ENCODE measurements at regions of chr6 and their contacts with region 1.

Region 1: GRCh38 chr6:133502441-133503259 is 261.5 kb downstream of the EYA4 start:
- DNase-seq: no peak
- ATAC-seq: no peak
- H3K4me3 ChIP-seq: no peak overlapping the region
- H3K27ac ChIP-seq: no peak overlapping the region
- H3K4me1 ChIP-seq: no peaks in the 10 kb centered on the region
- H3K27me3 ChIP-seq: no peaks in the 10 kb centered on the region
- CTCF ChIP-seq: no peak

Region 2: DNA sequence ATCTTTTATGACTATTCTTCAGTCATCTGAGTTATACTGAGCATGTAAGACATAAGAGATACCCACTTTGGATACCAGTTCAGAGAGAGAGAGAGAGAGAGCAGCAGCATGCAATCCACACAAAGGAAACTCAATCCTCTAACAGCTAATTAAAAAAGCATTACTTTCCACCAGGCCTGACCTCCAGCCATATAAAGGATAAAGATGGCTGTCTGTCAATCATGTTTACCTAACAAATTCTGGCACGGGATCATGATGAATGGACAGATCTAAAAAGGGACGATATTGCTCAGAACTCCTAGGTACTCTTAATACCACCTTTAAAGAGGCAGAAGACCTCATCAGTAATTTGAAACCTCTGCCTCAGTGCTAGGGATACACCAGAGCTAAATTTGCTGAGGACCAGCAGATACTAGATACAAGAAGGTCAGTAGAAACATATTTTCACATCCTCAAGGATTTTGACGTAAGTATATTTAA is 529.1 kb before region 1 on chr6:
- CTCF ChIA-PET with region 1: no interaction called
- POLR2A ChIA-PET with region 1: no interaction called
- in situ Hi-C with region 1: no loop called
- intact Hi-C with region 1: no loop called
- DNase-seq: no peak
- ATAC-seq: no peak
- H3K4me3 ChIP-seq: no peak overlapping the region
- H3K27ac ChIP-seq: no peak overlapping the region
- H3K4me1 ChIP-seq: no peaks in the 10 kb centered on the region
- H3K27me3 ChIP-seq: no peaks in the 10 kb centered on the region
- CTCF ChIP-seq: no peak

Region 3: GRCh38 chr6:133887156-133887879 is 384.7 kb after region 1 on chr6:
- CTCF ChIA-PET with region 1: interaction called, 15 read pairs
- POLR2A ChIA-PET with region 1: no interaction called
- in situ Hi-C with region 1: no loop called
- intact Hi-C with region 1: no loop called
- DNase-seq: no peak
- ATAC-seq: no peak
- H3K4me3 ChIP-seq: no peak overlapping the region
- H3K27ac ChIP-seq: no peak overlapping the region
- H3K4me1 ChIP-seq: no peaks in the 10 kb centered on the region
- H3K27me3 ChIP-seq: peaks cover 37% of the 10 kb centered on the region
- CTCF ChIP-seq: no peak

Region 4: GRCh38 chr6:134105924-134106323 is 603.3 kb after region 1 on chr6:
- CTCF ChIA-PET with region 1: no interaction called
- POLR2A ChIA-PET with region 1: no interaction called
- in situ Hi-C with region 1: no loop called
- intact Hi-C with region 1: no loop called
- DNase-seq: no peak
- ATAC-seq: peak; percentile 43; the same call in 1 of the 2 replicates
- H3K4me3 ChIP-seq: no peak overlapping the region
- H3K27ac ChIP-seq: 0 out of 2 replicates have a peak overlapping the region, but pooled peaks have one; percentile 41
- H3K4me1 ChIP-seq: peaks cover 11% of the 10 kb centered on the region
- H3K27me3 ChIP-seq: no peaks in the 10 kb centered on the region
- CTCF ChIP-seq: no peak

Measured in Panc1 (cell line).